ENCODE measurements at regions of chr3 and their contacts with region 1.

Region 1: DNA sequence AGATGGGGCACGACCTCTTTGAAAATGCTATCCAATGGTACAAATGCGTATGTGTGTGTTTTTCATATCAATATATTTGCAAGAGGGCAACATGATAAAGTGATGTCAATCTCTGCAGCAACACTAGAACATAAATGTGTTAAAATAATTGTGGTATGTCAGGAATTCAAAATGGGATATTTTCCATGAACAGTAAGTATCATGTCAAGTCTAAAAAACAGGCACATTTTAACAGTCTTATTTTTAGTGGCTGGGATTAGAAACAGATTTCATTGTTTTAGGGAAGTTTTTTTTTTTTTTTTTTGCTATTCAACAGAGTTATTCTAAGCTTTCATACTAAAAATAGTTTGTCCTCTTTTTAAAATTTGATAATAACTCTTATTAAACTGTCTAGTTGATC is 209.8 kb downstream of the GAP43 start:
- DNase-seq: no peak
- H3K4me3 ChIP-seq: no peak overlapping the region
- H3K27ac ChIP-seq: no peak overlapping the region
- H3K4me1 ChIP-seq: peaks cover 0 to 7% (median 0%) of the 10 kb centered on the region in 4 experiments
- H3K27me3 ChIP-seq: peaks cover 0 to 2% (median 0%) of the 10 kb centered on the region in 5 experiments

Region 2: DNA sequence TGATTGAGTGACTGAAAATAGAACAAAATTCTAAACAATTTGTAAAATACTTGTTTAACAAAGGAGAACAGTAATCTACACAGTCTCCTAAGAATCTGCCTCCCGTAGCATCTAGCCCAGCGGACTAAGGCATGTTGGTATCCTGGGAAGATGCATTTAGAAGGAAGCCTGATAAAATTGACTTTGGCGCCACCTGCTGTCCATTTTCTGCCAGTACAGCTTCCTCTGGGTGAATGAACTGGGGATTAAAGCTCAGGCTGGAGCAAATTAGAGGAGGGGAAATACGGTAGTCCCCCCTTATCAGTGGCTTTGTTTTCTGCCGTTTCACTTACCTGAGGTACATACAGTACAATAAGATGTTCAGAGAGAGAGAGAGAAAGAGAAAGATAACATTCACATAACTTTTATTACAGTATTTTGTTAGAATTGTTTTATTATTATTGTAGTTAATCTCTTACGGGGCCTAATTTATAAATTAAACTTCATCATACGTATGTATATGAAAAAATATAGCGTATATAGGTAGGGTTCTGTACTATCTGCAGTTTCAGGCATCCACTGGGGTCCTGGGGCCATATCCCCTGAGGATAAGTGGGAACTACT is 18.2 kb before region 1 on chr3:
- CTCF ChIA-PET with region 1: interaction called, 12 read pairs
- POLR2A ChIA-PET with region 1: no interaction called
- DNase-seq: peak; percentile 49 to 67 (median 51)
- H3K4me3 ChIP-seq: no peak overlapping the region
- H3K27ac ChIP-seq: no peak overlapping the region
- H3K4me1 ChIP-seq: no peaks in the 10 kb centered on the region
- H3K27me3 ChIP-seq: peaks cover 0 to 5% (median 2%) of the 10 kb centered on the region in 5 experiments

Region 3: GRCh38 chr3:115819785-115820384 is 13.2 kb before region 1 on chr3:
- CTCF ChIA-PET with region 1: interaction called, 12 read pairs
- POLR2A ChIA-PET with region 1: no interaction called
- DNase-seq: peak; percentile 88 to 93 (median 88)
- H3K4me3 ChIP-seq: no peak overlapping the region
- H3K27ac ChIP-seq: no peak overlapping the region
- H3K4me1 ChIP-seq: no peaks in the 10 kb centered on the region
- H3K27me3 ChIP-seq: peaks cover 0 to 1% (median 0%) of the 10 kb centered on the region in 5 experiments

Region 4: GRCh38 chr3:115843206-115843605 is 10.1 kb after region 1 on chr3:
- CTCF ChIA-PET with region 1: interaction called, 10 read pairs
- POLR2A ChIA-PET with region 1: no interaction called
- DNase-seq: no peak
- H3K4me3 ChIP-seq: no peak overlapping the region
- H3K27ac ChIP-seq: no peak overlapping the region
- H3K4me1 ChIP-seq: no peaks in the 10 kb centered on the region
- H3K27me3 ChIP-seq: no peaks in the 10 kb centered on the region